ENCODE measurements at regions of chr4 and their contacts with region 1.

Region 1: GRCh38 chr4:185395956-185396723 is 416 bp upstream of the LRP2BP start:
- DNase-seq: peak; percentile 99
- H3K4me3 ChIP-seq: peak overlapping the region; percentile 54 to 90 (median 87)
- H3K27ac ChIP-seq: peak overlapping the region; percentile 96
- H3K4me1 ChIP-seq: peaks cover 37% of the 10 kb centered on the region
- H3K27me3 ChIP-seq: no peaks in the 10 kb centered on the region
- CTCF ChIP-seq: no peak
- POLR2A ChIP-seq: peak; percentile 59

Region 2: DNA sequence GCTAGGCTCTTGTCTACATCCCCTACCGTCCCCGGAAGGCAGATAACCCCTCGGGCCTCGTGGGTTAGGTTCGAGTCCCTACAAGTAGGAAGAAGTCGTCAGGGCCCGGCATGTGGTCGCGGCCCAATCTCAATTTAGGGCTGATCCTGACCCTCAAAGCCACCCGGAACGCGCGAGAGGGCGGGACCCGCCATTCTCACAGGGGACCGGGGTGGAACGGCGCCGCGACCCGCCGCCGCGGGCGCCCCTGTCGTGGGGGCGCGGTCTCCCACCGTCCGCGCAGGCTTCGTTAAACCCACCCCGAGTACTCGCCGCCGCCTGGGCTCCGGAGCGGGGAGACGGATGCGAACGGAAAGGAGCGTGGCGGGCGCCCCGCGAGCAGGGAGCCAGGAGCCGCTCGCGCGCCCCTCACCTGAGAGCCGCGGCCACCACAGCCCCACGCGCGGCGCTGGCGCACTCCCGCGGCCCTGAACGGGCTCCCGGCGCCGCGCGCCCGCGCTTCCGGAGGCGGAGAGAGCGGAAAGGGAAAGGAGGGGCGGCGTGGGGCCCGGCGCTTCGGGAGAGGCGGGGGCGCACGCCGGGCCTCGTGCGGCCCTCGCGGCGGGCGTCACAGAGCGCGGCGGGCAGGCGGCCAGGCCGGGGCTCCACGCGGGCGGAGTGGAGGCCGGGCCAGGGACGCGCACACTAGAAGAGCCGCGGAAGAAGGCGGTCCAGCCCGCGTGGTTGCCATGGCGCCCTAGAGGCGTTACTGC is 192.5 kb before region 1 on chr4 and contains the start of gene CFAP97:
- CTCF ChIA-PET with region 1: interaction called, 6 read pairs
- POLR2A ChIA-PET with region 1: no interaction called
- dilution Hi-C with region 1: no loop called
- intact Hi-C with region 1: loop called (anchors 1 kb)
- DNase-seq: peak; percentile 90
- H3K4me3 ChIP-seq: peak within 1 kb of the TSS; percentile 60 to 89 (median 64)
- H3K27ac ChIP-seq: peak within 1 kb of the TSS; percentile 79
- H3K4me1 ChIP-seq: peaks cover 34% of the 10 kb centered on the region
- H3K27me3 ChIP-seq: no peaks in the 10 kb centered on the region
- CTCF ChIP-seq: no peak
- POLR2A ChIP-seq: peak; percentile 43
- total RNA-seq, gene CFAP97: 17.6 and 22.4 TPM in 2 replicates

Region 3: DNA sequence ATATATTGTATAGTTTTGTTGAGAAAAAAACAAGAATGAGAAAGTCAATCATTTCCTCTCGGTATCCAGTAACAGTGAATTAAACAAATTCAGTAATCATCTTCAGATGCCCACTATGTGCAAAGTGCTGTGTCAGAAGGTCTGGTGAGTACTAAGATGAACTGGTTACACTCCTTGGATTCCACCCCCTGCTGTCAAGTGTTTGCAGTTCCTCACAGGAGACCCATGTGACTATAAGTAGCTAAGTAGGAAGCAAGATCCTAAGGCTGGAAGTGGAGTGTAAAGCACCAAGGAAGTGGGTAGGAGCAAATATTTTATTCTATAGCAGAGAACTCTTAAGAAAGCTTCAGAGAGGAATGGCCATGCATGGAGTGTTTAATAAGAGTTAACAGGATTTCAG is 113.2 kb before region 1 on chr4:
- CTCF ChIA-PET with region 1: no interaction called
- POLR2A ChIA-PET with region 1: no interaction called
- dilution Hi-C with region 1: loop called (anchors 25 kb)
- intact Hi-C with region 1: no loop called
- DNase-seq: no peak
- H3K4me3 ChIP-seq: no peak overlapping the region
- H3K27ac ChIP-seq: no peak overlapping the region
- H3K4me1 ChIP-seq: peaks cover 12% of the 10 kb centered on the region
- H3K27me3 ChIP-seq: no peaks in the 10 kb centered on the region
- CTCF ChIP-seq: no peak
- POLR2A ChIP-seq: no peak

Region 4: GRCh38 chr4:185343726-185344581 is 52.2 kb before region 1 on chr4:
- CTCF ChIA-PET with region 1: no interaction called
- POLR2A ChIA-PET with region 1: no interaction called
- dilution Hi-C with region 1: no loop called
- intact Hi-C with region 1: loop called (anchors 2 kb)
- DNase-seq: peak; percentile 57
- H3K4me3 ChIP-seq: no peak overlapping the region
- H3K27ac ChIP-seq: peak overlapping the region; percentile 62
- H3K4me1 ChIP-seq: peaks cover 19% of the 10 kb centered on the region
- H3K27me3 ChIP-seq: no peaks in the 10 kb centered on the region
- CTCF ChIP-seq: no peak
- POLR2A ChIP-seq: no peak

Region 5: DNA sequence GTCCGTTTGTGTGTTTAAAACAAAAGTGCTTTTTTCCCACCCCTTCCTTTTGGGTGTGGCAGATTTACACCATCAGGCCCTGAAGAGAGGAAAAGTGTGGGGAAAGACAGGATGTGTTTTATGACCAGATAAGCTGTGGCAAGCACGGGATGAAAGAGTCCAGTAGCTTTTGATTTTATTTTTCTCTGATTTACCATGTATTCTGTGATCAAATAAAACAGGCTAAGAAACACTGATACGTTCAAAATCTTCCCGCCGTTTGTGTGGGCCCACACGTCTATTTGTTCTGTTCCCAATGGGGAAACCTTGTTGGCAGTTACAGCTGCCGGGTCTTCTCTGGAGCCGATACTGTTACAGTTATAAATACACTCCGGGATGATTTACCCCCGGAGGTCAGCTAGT is 11.2 kb before region 1 on chr4:
- CTCF ChIA-PET with region 1: interaction called, 21 read pairs
- POLR2A ChIA-PET with region 1: interaction called, 5 read pairs
- dilution Hi-C with region 1: no loop called
- intact Hi-C with region 1: loop called (anchors 1 kb)
- DNase-seq: peak; percentile 94
- H3K4me3 ChIP-seq: peak overlapping the region in 1 of 3 experiments; percentile 32
- H3K27ac ChIP-seq: peak overlapping the region; percentile 88
- H3K4me1 ChIP-seq: peaks cover 23% of the 10 kb centered on the region
- H3K27me3 ChIP-seq: no peaks in the 10 kb centered on the region
- CTCF ChIP-seq: no peak
- POLR2A ChIP-seq: no peak

Region 6: GRCh38 chr4:185425647-185426352 is 29.7 kb after region 1 on chr4 and contains the start of gene UFSP2:
- CTCF ChIA-PET with region 1: interaction called, 12 read pairs
- POLR2A ChIA-PET with region 1: interaction called, 3 read pairs
- dilution Hi-C with region 1: no loop called
- intact Hi-C with region 1: loop called (anchors 1 kb)
- DNase-seq: peak; percentile 93
- H3K4me3 ChIP-seq: peak within 1 kb of the TSS; percentile 59 to 90 (median 69)
- H3K27ac ChIP-seq: peak within 1 kb of the TSS; percentile 96
- H3K4me1 ChIP-seq: peaks cover 8% of the 10 kb centered on the region
- H3K27me3 ChIP-seq: no peaks in the 10 kb centered on the region
- CTCF ChIP-seq: no peak
- POLR2A ChIP-seq: no peak
- total RNA-seq, gene UFSP2: 25.2 and 26.7 TPM in 2 replicates

Region 7: GRCh38 chr4:185513489-185514181 is 117.5 kb after region 1 on chr4:
- CTCF ChIA-PET with region 1: no interaction called
- POLR2A ChIA-PET with region 1: no interaction called
- dilution Hi-C with region 1: no loop called
- intact Hi-C with region 1: loop called (anchors 5 kb)
- DNase-seq: peak; percentile 86
- H3K4me3 ChIP-seq: peak overlapping the region in 1 of 3 experiments; percentile 10
- H3K27ac ChIP-seq: peak overlapping the region; percentile 85
- H3K4me1 ChIP-seq: peaks cover 24% of the 10 kb centered on the region
- H3K27me3 ChIP-seq: no peaks in the 10 kb centered on the region
- CTCF ChIP-seq: no peak
- POLR2A ChIP-seq: no peak

Region 8: DNA sequence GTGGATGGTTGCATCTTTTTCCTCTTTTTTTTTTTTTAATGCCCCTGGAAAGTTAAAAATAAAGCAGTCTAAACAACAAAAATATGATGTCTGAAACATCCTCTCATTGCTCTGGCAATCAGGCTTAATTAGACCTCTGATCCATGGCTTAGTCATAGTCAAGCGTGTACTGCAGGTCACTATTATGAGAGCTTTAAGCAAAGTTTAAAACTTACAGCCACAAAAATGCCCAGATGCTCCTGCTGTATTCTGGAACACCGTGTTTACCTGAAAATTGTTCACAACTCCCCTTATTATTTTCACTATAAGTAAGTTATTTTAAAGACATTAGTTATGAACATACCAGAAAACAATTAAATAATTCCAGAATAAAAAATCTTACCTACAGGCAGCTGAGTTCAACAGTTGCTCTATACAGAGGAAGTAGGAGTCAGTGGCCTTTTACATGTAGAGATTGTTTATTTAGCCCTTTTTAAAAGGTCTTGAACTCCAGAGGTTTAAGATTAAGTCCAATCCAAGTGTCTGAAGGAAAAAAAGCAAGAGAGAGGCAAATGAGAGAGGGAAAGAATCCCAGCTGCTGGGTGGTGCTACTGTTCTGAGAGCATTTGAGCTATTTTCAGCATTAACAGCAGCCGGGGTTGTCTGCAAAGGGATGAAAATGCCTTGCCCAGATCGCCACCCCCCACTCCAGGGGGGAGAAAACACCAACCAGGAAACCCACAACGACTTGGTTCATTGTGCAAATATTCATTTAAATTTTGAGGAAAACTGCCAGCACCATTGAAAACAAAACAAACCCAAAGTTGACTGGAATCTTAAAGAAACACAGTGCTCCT is 378.9 kb after region 1 on chr4:
- CTCF ChIA-PET with region 1: no interaction called
- POLR2A ChIA-PET with region 1: no interaction called
- dilution Hi-C with region 1: no loop called
- intact Hi-C with region 1: no loop called
- DNase-seq: peak; percentile 92
- H3K4me3 ChIP-seq: peak overlapping the region; percentile 50 to 88 (median 62)
- H3K27ac ChIP-seq: peak overlapping the region; percentile 91
- H3K4me1 ChIP-seq: peaks cover 46% of the 10 kb centered on the region
- H3K27me3 ChIP-seq: no peaks in the 10 kb centered on the region
- CTCF ChIP-seq: no peak
- POLR2A ChIP-seq: peak; percentile 69

Measured in endothelial cell of umbilical vein (primary cell).